PC-9 (cell line): ENCODE measurements at regions of chr3 and their contacts with region 1.

Region 1: DNA sequence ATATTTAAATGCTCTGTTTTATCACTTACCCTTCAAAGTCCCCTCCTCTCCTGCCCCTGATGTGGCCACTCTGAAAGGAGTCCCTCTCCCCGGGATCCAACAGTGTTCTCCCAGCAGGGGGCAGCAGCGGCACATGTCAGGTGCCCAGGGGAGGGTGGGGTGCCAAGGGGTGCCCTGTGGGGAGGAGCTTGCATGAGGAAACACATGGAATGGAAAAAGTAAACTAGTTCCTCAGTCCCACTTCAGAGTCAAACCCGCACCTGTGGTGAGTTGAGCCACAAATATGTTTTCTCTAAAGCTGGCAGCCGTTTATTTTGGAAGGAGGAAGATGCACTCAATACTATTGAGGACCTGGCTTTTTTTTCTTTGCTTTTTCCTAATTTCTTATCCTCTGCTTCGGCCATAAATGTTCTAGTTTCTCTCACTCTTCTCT is 30.1 kb upstream of the NRROS start:
- DNase-seq: peak; percentile 86 to 93
- H3K4me3 ChIP-seq: no peak overlapping the region
- H3K27ac ChIP-seq: peak overlapping the region; percentile 12
- H3K4me1 ChIP-seq: peaks cover 28% of the 10 kb centered on the region
- H3K27me3 ChIP-seq: no peaks in the 10 kb centered on the region
- CTCF ChIP-seq: peak; percentile 100

Region 2: GRCh38 chr3:196317687-196318467 is 291.5 kb before region 1 on chr3 and contains the start of gene DYNLT2B:
- CTCF ChIA-PET with region 1: no interaction called
- POLR2A ChIA-PET with region 1: no interaction called
- intact Hi-C with region 1: no loop called
- DNase-seq: no peak
- H3K4me3 ChIP-seq: no peak within 1 kb of the TSS
- H3K27ac ChIP-seq: no peak within 1 kb of the TSS
- H3K4me1 ChIP-seq: no peaks in the 10 kb centered on the region
- H3K27me3 ChIP-seq: no peaks in the 10 kb centered on the region
- CTCF ChIP-seq: no peak
- total RNA-seq, gene DYNLT2B: 5.1 and 5.3 TPM in 2 replicates

Region 3: GRCh38 chr3:196537319-196537984 is 71.9 kb before region 1 on chr3:
- CTCF ChIA-PET with region 1: interaction called, 5 read pairs
- POLR2A ChIA-PET with region 1: no interaction called
- intact Hi-C with region 1: loop called (anchors 5 kb)
- DNase-seq: peak; percentile 46 to 70
- H3K4me3 ChIP-seq: no peak overlapping the region; the same call in 1 of the 2 replicates
- H3K27ac ChIP-seq: no peak overlapping the region; the same call in 1 of the 2 replicates
- H3K4me1 ChIP-seq: 0 out of 2 replicates have a peak, but pooled peaks cover 8% of the 10 kb centered on the region
- H3K27me3 ChIP-seq: no peaks in the 10 kb centered on the region
- CTCF ChIP-seq: peak; percentile 96

Region 4: GRCh38 chr3:196726788-196727675 is 117.7 kb after region 1 on chr3:
- CTCF ChIA-PET with region 1: interaction called, 14 read pairs
- POLR2A ChIA-PET with region 1: no interaction called
- intact Hi-C with region 1: no loop called
- DNase-seq: peak; percentile 19 to 86
- H3K4me3 ChIP-seq: no peak overlapping the region
- H3K27ac ChIP-seq: peak overlapping the region; percentile 62
- H3K4me1 ChIP-seq: peaks cover 36% of the 10 kb centered on the region
- H3K27me3 ChIP-seq: no peaks in the 10 kb centered on the region
- CTCF ChIP-seq: no peak

Region 5: GRCh38 chr3:196942226-196942914 is 333.0 kb after region 1 on chr3 and contains the start of gene NCBP2:
- CTCF ChIA-PET with region 1: interaction called, 4 read pairs
- POLR2A ChIA-PET with region 1: no interaction called
- intact Hi-C with region 1: loop called (anchors 1 kb)
- DNase-seq: peak; percentile 95 to 100
- H3K4me3 ChIP-seq: peak within 1 kb of the TSS; percentile 92
- H3K27ac ChIP-seq: peak within 1 kb of the TSS; percentile 90
- H3K4me1 ChIP-seq: peaks cover 20% of the 10 kb centered on the region
- H3K27me3 ChIP-seq: no peaks in the 10 kb centered on the region
- CTCF ChIP-seq: peak; percentile 69
- total RNA-seq, gene NCBP2: 83.8 and 91.8 TPM in 2 replicates

Region 6: GRCh38 chr3:197186887-197187588 is 577.7 kb after region 1 on chr3:
- CTCF ChIA-PET with region 1: no interaction called
- POLR2A ChIA-PET with region 1: no interaction called
- intact Hi-C with region 1: loop called (anchors 10 kb)
- DNase-seq: peak; percentile 8 to 69
- H3K4me3 ChIP-seq: no peak overlapping the region
- H3K27ac ChIP-seq: no peak overlapping the region
- H3K4me1 ChIP-seq: peaks cover 16% of the 10 kb centered on the region
- H3K27me3 ChIP-seq: no peaks in the 10 kb centered on the region
- CTCF ChIP-seq: peak; percentile 95